ENCODE measurements at regions of chr9 and their contacts with region 1.

Region 1: GRCh38 chr9:131138676-131139075 is 13.3 kb downstream of the NUP214 start:
- DNase-seq: no peak
- H3K4me3 ChIP-seq: no peak overlapping the region
- H3K27ac ChIP-seq: no peak overlapping the region
- H3K4me1 ChIP-seq: no peaks in the 10 kb centered on the region
- H3K27me3 ChIP-seq: no peaks in the 10 kb centered on the region
- CTCF ChIP-seq: no peak

Region 2: DNA sequence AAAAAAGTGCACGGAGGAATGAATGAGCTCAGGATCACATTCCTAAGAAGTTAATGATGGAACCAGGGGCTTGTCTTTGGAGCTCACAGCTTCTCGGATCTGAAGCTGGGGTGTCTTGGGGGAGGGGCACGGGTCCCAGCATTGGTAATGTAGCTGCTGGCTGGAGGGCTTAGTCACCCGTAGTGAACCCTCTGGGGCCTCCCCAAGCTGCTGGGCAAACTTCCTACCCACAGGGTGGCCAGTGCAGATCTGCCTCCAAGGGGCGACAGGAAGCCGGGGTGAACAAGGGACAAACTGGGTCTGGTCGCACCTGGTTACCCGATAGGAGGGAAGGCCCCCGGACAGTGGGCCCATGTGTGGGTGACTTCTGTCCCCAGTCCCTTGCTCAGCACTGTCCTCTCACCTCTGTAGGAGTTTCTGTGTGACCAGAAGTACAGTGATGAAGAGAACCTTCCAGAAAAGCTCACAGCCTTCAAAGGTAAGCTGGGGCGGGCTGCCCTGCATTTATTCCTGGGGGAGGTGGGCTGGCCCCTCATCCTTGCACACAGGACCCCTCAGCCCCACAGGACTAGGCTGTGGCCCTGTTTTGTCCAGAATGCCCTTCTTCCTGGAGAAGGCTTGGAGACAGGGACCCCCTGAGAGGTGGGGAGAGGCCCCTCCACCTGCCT is 27.4 kb before region 1 on chr9:
- CTCF ChIA-PET with region 1: interaction called, 16 read pairs
- POLR2A ChIA-PET with region 1: no interaction called
- intact Hi-C with region 1: no loop called
- DNase-seq: no peak
- H3K4me3 ChIP-seq: no peak overlapping the region
- H3K27ac ChIP-seq: no peak overlapping the region
- H3K4me1 ChIP-seq: no peaks in the 10 kb centered on the region
- H3K27me3 ChIP-seq: no peaks in the 10 kb centered on the region
- CTCF ChIP-seq: no peak

Region 3: GRCh38 chr9:131121346-131121745 is 17.3 kb before region 1 on chr9:
- CTCF ChIA-PET with region 1: no interaction called
- POLR2A ChIA-PET with region 1: no interaction called
- intact Hi-C with region 1: no loop called
- DNase-seq: no peak
- H3K4me3 ChIP-seq: no peak overlapping the region
- H3K27ac ChIP-seq: no peak overlapping the region
- H3K4me1 ChIP-seq: peaks cover under 1% of the 10 kb centered on the region
- H3K27me3 ChIP-seq: no peaks in the 10 kb centered on the region
- CTCF ChIP-seq: no peak

Measured in A673 (cell line).